ENCODE measurements at regions of chr16 and their contacts with region 1.

Region 1: GRCh38 chr16:66552286-66553177 is at the start of gene CKLF:
- DNase-seq: peak; percentile 93
- H3K4me3 Mint-ChIP-seq: peak within 1 kb of the TSS; percentile 99
- H3K27ac Mint-ChIP-seq: peak within 1 kb of the TSS; percentile 95
- H3K4me1 Mint-ChIP-seq: peaks cover 81% of the 10 kb centered on the region
- H3K27me3 Mint-ChIP-seq: peaks cover 2% of the 10 kb centered on the region
- total RNA-seq, gene CKLF: 153 and 159 TPM in 2 replicates

Region 2: GRCh38 chr16:66516808-66517585 is 35.5 kb before region 1 on chr16:
- intact Hi-C with region 1: loop called (anchors 1 kb)
- DNase-seq: peak; percentile 84
- H3K4me3 Mint-ChIP-seq: peak overlapping the region; percentile 88
- H3K27ac Mint-ChIP-seq: peak overlapping the region; percentile 99
- H3K4me1 Mint-ChIP-seq: peaks cover 78% of the 10 kb centered on the region
- H3K27me3 Mint-ChIP-seq: no peaks in the 10 kb centered on the region

Region 3: DNA sequence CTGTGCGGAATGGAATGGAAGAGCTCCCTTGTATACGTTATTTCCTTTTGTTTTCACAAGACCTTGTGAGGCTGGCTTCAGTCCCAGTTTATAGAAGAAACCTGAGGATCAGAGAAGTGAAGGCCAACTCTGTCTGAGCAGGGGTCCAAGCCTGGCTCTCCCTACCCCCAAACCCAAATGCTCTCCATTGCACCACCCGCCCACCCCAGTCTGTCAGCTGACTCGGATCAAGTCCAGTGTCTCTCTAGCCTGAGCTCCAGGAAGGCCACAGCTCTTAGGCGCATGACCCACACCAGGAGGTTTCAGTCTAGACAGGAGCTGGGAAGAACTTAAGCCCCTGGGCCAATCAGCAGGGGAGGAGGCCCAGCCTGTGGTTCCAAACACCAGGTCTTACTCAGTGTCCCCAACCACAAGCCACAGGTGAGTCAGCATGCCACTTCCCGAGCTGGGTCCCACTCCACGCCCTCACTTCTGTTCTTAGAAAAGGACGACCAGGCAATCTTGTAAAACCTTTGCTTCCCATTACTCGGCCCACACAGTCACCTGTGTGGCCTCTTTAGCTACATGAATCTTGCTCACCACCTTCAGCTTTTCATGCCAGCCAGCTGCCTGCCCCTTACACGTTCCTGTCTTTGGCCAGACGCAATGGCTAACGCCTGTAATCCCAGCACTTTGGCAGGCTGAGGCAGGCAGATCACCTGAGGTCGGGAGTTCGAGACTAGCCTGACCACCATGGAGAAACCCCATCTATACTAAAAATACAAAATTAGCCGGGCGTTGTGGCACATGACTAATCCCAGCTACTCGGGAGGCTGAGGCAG is 30.4 kb before region 1 on chr16:
- intact Hi-C with region 1: loop called (anchors 1 kb)
- DNase-seq: peak; percentile 88
- H3K4me3 Mint-ChIP-seq: peak overlapping the region; percentile 53
- H3K27ac Mint-ChIP-seq: peak overlapping the region; percentile 77
- H3K4me1 Mint-ChIP-seq: peaks cover 93% of the 10 kb centered on the region
- H3K27me3 Mint-ChIP-seq: peaks cover 2% of the 10 kb centered on the region

Region 4: GRCh38 chr16:66578651-66579531 is 26.4 kb after region 1 on chr16 and contains the start of gene CMTM2:
- intact Hi-C with region 1: no loop called
- DNase-seq: no peak
- H3K4me3 Mint-ChIP-seq: peak within 1 kb of the TSS; percentile 11
- H3K27ac Mint-ChIP-seq: no peak within 1 kb of the TSS
- H3K4me1 Mint-ChIP-seq: peaks cover 14% of the 10 kb centered on the region
- H3K27me3 Mint-ChIP-seq: peaks cover 34% of the 10 kb centered on the region
- total RNA-seq, gene CMTM2: 0.80 and 1.2 TPM in 2 replicates

Region 5: GRCh38 chr16:66588981-66589713 is 36.6 kb after region 1 on chr16:
- intact Hi-C with region 1: loop called (anchors 2 kb)
- DNase-seq: peak; percentile 54
- H3K4me3 Mint-ChIP-seq: peak overlapping the region; percentile 73
- H3K27ac Mint-ChIP-seq: peak overlapping the region; percentile 49
- H3K4me1 Mint-ChIP-seq: peaks cover 42% of the 10 kb centered on the region
- H3K27me3 Mint-ChIP-seq: peaks cover 3% of the 10 kb centered on the region